Natural killer cell (primary cell): ENCODE measurements at regions of chr12 and their contacts with region 1.

Region 1: GRCh38 chr12:30754709-30755394 is at the start of gene CAPRIN2:
- DNase-seq: peak; percentile 90 to 95
- ATAC-seq: peak; percentile 87 to 95 (median 89)
- H3K4me3 ChIP-seq: peak within 1 kb of the TSS; percentile 59
- H3K4me3 Mint-ChIP-seq: peak within 1 kb of the TSS; percentile 94
- H3K27ac ChIP-seq: peak within 1 kb of the TSS; percentile 74
- H3K27ac Mint-ChIP-seq: peak within 1 kb of the TSS; percentile 82 to 87
- H3K4me1 ChIP-seq: peaks cover 16% of the 10 kb centered on the region
- H3K4me1 Mint-ChIP-seq: peaks cover 23 to 43% of the 10 kb centered on the region in 2 donors
- H3K27me3 ChIP-seq: no peaks in the 10 kb centered on the region
- H3K27me3 Mint-ChIP-seq: no peaks in the 10 kb centered on the region
- CTCF ChIP-seq: no peak
- total RNA-seq, gene CAPRIN2: 38.1 to 53.2 (median 38.7) TPM

Region 2: DNA sequence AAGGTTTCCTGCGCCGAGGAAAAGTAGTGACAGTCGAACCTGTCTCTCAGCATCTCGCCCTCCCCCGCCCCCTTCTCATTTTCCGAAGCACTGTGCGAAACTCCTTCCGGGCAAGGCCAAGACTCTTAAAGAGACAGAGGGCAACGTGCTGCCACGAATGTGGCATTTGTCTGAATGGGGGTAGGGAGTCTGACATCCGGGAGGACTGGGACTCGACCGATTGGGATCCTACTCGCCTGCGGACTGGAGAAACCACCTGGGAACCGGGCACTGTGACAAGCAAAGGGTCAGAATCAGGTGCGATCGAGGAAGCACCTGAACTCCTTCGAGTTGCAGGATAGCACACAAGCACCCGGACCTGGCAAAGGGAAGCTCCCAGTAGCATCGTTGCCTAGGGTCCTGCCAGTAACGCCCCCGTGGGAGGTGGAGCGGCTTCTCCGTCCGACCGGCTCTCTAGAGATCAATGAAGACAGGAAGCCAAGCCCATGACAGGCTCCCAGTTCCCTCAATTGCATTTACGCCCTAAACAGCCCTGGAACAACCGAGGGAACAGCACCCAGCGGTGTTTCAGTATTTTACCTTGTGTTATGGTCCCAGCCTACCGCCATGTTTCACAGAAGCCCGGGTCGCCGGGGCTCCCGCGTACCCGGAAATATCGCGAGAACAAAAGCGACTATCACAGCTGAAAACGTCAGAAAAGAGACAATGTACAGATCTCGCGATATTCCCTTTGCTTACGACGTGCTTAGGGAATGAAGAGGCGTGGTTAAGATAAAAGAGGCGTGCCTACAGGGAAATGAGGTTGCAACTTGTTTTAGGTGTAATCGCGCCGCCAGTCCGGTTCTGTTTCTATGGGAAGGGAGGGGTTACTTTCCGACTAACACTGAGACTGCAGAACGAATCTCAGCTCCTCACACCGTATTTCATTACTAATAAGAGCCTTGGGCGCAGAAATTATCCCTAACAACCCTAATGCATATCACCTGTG is 1374.0 kb before region 1 on chr12 and contains the start of gene ERGIC2:
- intact Hi-C with region 1: loop called (anchors 2 kb)
- DNase-seq: peak; percentile 82 to 99
- ATAC-seq: peak; percentile 95 to 97 (median 95)
- H3K4me3 ChIP-seq: peak within 1 kb of the TSS; percentile 98
- H3K4me3 Mint-ChIP-seq: peak within 1 kb of the TSS; percentile 91
- H3K27ac ChIP-seq: peak within 1 kb of the TSS; percentile 97
- H3K27ac Mint-ChIP-seq: peak within 1 kb of the TSS; percentile 92 to 97
- H3K4me1 ChIP-seq: peaks cover 3% of the 10 kb centered on the region
- H3K4me1 Mint-ChIP-seq: peaks cover 36 to 39% of the 10 kb centered on the region in 2 donors
- H3K27me3 ChIP-seq: no peaks in the 10 kb centered on the region
- H3K27me3 Mint-ChIP-seq: peaks cover 3 to 20% of the 10 kb centered on the region in 2 donors
- CTCF ChIP-seq: no peak
- total RNA-seq, gene ERGIC2: 28.7 to 46.9 (median 37.2) TPM

Region 3: GRCh38 chr12:30795410-30796312 is 40.8 kb after region 1 on chr12:
- intact Hi-C with region 1: loop called (anchors 1 kb)
- DNase-seq: peak; percentile 50 to 64
- ATAC-seq: peak; percentile 72 to 82 (median 82)
- H3K4me3 ChIP-seq: peak overlapping the region; percentile 75
- H3K4me3 Mint-ChIP-seq: peak overlapping the region; percentile 86
- H3K27ac ChIP-seq: peak overlapping the region; percentile 66
- H3K27ac Mint-ChIP-seq: peak overlapping the region; percentile 53 to 88
- H3K4me1 ChIP-seq: peaks cover 23% of the 10 kb centered on the region
- H3K4me1 Mint-ChIP-seq: peaks cover 5 to 28% of the 10 kb centered on the region in 2 donors
- H3K27me3 ChIP-seq: peaks cover 5% of the 10 kb centered on the region
- H3K27me3 Mint-ChIP-seq: peaks cover 0 to 3% of the 10 kb centered on the region in 2 donors
- CTCF ChIP-seq: no peak

Region 4: DNA sequence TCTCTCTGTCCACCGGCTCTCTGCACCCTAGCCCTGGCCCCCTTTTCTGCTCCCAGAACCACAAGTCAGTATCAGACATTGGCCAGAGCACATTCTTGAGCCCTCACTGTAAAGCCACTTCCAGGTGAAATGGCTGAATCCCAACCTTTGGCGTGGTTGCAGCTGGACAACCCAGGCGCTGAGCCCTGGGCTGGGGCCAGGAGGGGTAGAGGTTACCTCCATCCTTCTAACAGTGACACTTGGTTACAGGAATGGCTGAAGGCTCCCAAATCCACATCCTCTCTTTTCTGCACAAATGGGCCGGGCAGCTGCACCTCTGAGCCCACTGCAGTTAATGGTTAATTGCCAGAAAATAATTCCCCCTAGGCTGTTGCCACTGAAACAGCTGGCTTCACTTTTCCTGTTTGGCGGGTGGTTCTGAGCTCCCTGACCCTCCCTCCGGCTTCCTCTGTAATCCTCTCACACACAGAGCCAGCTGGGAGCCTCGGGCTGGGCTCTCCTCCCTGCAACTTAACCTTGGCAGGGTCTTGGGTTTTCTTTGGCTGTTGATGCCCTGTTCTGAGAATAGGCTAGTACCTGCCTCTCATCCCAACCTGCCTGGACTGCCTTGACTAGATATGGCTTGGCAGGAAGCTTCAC is 215.8 kb after region 1 on chr12:
- intact Hi-C with region 1: no loop called
- DNase-seq: no peak
- ATAC-seq: no peak
- H3K4me3 ChIP-seq: no peak overlapping the region
- H3K4me3 Mint-ChIP-seq: no peak overlapping the region
- H3K27ac ChIP-seq: no peak overlapping the region
- H3K27ac Mint-ChIP-seq: no peak overlapping the region
- H3K4me1 ChIP-seq: no peaks in the 10 kb centered on the region
- H3K4me1 Mint-ChIP-seq: no peaks in the 10 kb centered on the region
- H3K27me3 ChIP-seq: no peaks in the 10 kb centered on the region
- H3K27me3 Mint-ChIP-seq: peaks cover 0 to 5% of the 10 kb centered on the region in 2 donors
- CTCF ChIP-seq: no peak